Activated naive CD4-positive, alpha-beta T cell treated with anti-CD3 and anti-CD28 coated beads for 36 hours (primary cell): ENCODE measurements at regions of chr12 and their contacts with region 1.

Region 1: DNA sequence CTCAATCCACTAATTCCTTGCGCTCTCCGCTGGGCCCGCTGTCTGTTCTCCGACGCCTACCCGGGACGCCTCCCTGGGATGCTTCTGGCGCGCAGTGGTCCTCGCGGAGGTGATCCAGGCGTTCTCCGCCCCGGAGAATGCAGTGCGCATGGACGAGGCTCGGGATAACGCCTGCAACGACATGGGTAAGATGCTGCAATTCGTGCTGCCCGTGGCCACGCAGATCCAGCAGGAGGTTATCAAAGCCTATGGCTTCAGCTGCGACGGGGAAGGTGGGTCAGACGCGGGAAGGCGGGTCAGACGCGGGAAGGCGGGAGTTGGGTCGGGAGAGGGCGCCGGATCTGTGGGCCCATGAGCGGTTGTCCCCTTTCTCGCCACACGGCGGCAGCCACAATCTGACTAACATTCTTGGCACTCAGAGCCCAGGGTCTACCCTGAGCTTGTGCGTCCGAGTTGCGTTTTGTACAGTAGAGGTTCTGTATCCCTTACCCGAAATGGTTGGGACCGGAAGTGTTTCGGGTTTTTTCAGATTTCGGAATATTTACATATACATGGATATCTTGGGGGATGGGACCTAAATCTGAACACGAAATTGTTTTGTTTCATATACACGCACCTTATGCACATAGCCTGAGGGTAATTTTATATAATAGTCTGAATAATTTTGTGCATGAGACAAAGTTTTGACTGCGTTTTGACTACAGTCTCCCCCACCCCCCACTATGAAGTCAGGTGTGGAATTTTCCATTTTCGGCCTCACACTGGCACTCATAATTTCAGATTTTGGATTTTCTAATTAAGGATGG is 762 bp downstream of the C12orf57 start:
- DNase-seq: peak; percentile 96
- H3K4me3 Mint-ChIP-seq: peak overlapping the region; percentile 94
- H3K27ac Mint-ChIP-seq: peak overlapping the region; percentile 93
- H3K4me1 Mint-ChIP-seq: peaks cover 49% of the 10 kb centered on the region
- H3K27me3 Mint-ChIP-seq: no peaks in the 10 kb centered on the region

Region 2: GRCh38 chr12:6807170-6807569 is 137.4 kb before region 1 on chr12:
- CTCF ChIA-PET with region 1: no interaction called
- intact Hi-C with region 1: no loop called
- DNase-seq: no peak
- H3K4me3 Mint-ChIP-seq: no peak overlapping the region
- H3K27ac Mint-ChIP-seq: no peak overlapping the region
- H3K4me1 Mint-ChIP-seq: peaks cover 19% of the 10 kb centered on the region
- H3K27me3 Mint-ChIP-seq: no peaks in the 10 kb centered on the region

Region 3: DNA sequence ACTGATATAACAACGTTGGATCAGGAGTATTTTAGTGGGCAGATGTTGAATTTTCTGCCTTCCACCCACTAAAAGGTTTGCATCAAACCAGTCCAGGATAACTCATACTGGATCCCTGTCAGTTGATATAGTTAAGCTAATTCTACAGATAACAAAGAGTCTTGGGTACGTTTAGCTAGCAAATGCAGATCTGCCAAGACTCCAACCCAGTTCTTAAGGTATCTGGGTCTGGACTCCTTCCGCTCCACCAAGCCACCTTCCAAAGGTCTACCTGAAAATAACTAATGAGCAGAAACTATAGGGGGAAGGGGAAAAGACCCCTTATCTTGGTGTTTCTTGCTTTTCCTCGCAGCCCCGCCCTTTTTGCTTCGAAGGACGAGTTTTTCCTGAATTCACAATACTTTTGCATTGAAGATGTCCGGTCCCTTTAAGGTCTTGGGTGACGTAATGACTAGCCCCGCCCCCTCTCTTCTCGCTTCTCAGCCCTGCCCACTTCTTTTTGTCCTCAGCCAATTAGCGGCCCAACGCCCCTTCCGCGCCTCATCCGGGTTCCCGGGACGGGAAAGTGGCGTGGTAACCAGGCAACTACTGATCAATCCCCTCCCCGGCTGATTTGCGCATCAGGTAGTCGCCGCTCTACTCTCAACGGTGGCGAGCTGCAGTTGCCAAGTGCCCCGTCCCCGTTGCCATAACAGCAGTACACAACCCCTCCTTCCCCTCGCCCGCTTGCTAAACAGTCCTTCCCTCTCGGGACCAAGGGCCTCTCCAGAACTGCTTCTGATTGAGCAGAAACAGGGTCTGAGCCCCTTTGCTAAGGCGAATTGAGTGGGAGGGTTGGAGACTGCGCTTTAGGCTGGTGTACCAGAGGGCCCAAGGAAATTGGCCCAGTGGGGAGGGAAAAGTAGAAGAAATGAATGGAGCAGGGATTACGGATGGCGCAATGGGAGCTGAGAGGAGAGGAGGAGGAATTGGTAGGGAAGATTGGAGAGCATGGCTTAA is 40.0 kb before region 1 on chr12 and contains the start of gene LRRC23:
- CTCF ChIA-PET with region 1: interaction called, 3 read pairs
- intact Hi-C with region 1: loop called (anchors 2 kb)
- DNase-seq: peak; percentile 99
- H3K4me3 Mint-ChIP-seq: no peak within 1 kb of the TSS
- H3K27ac Mint-ChIP-seq: no peak within 1 kb of the TSS
- H3K4me1 Mint-ChIP-seq: peaks cover 3% of the 10 kb centered on the region
- H3K27me3 Mint-ChIP-seq: no peaks in the 10 kb centered on the region
- total RNA-seq, gene LRRC23: 6.3 to 6.4 TPM

Region 4: DNA sequence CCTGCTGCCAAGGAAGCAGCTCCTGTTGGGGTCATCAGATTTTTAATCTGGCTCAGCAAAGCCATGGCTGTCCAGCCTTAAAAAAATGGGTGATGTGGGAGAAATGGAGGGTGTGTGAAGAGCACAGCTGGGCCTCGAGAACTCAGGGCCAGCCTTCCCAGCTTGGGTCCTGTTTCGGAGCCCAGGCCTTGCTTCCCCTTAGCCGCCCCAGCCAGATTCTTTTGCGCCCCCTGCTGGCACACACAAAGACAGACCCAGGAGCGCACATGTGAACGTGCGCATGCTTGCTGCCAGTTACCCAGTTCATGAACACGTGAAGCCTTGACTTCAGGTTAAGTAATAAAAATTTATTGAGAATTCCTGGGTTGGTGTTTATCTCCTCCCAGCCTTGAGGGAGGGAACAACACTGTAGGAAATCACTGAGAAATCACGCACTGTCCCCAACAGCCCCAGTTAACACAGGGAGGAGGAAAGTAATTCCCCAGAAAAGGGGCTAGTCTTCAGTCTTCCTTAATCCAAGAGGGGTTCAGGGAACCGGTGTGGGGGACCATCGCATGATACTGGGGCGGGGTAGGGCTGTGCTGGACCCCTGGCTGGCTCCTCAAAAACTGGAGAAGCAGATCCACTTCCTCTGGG is 20.6 kb after region 1 on chr12:
- CTCF ChIA-PET with region 1: interaction called, 397 read pairs
- intact Hi-C with region 1: loop called (anchors 1 kb)
- DNase-seq: peak; percentile 95
- H3K4me3 Mint-ChIP-seq: no peak overlapping the region
- H3K27ac Mint-ChIP-seq: peak overlapping the region; percentile 93
- H3K4me1 Mint-ChIP-seq: peaks cover 81% of the 10 kb centered on the region
- H3K27me3 Mint-ChIP-seq: no peaks in the 10 kb centered on the region

Region 5: GRCh38 chr12:7042842-7043241 is 98.3 kb after region 1 on chr12:
- CTCF ChIA-PET with region 1: no interaction called
- intact Hi-C with region 1: loop called (anchors 1 kb)
- DNase-seq: no peak
- H3K4me3 Mint-ChIP-seq: no peak overlapping the region
- H3K27ac Mint-ChIP-seq: no peak overlapping the region
- H3K4me1 Mint-ChIP-seq: peaks cover 10% of the 10 kb centered on the region
- H3K27me3 Mint-ChIP-seq: no peaks in the 10 kb centered on the region

Region 6: DNA sequence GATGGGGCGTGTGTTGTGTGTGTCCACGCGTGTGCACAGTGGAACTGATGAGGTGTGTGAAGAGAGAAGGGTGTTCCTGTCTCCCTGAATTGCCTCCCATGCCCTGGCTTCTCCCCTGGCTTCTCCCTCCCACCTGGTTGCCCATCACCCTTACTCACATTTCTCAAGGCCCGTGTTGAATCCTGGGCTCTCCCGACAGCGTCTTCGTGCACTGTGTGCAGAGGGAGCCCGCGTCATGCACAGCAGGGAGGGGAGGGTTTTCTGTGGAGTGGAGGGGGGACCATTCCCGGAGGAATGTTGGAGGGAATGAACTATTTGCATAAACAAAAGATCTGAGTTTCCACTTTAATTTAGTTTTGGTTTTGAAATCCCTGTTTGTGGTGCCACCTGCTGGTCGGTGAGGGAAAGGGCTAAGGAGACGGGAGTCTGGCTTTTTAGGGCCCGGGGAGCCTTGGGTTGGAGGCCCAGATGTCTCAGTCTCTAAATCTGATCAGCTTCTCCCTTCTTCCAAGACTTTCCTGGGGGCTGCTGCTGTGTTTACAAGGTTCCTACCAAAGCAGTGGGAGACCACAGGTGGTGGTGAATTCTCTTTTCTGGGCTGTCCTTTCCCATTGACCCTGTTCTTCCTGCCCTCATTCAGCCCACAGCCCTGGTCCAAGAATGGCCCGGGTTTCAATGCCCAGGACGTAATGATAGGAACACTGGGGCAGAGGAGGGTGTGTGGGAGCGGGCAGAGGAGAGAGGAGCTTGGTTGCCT is 147.8 kb after region 1 on chr12 and contains the start of gene C1R:
- CTCF ChIA-PET with region 1: interaction called, 5 read pairs
- intact Hi-C with region 1: loop called (anchors 1 kb)
- DNase-seq: peak; percentile 83
- H3K4me3 Mint-ChIP-seq: peak within 1 kb of the TSS; percentile 73
- H3K27ac Mint-ChIP-seq: peak within 1 kb of the TSS; percentile 22
- H3K4me1 Mint-ChIP-seq: peaks cover 7% of the 10 kb centered on the region
- H3K27me3 Mint-ChIP-seq: no peaks in the 10 kb centered on the region
- total RNA-seq, gene C1R: 1.4 to 1.5 TPM

Region 7: GRCh38 chr12:7108796-7109571 is 164.4 kb after region 1 on chr12 and contains the start of gene C1RL:
- CTCF ChIA-PET with region 1: interaction called, 24 read pairs
- intact Hi-C with region 1: loop called (anchors 1 kb)
- DNase-seq: peak; percentile 91
- H3K4me3 Mint-ChIP-seq: peak within 1 kb of the TSS; percentile 95
- H3K27ac Mint-ChIP-seq: peak within 1 kb of the TSS; percentile 97
- H3K4me1 Mint-ChIP-seq: peaks cover 29% of the 10 kb centered on the region
- H3K27me3 Mint-ChIP-seq: no peaks in the 10 kb centered on the region
- total RNA-seq, gene C1RL: 10.3 to 11.5 TPM